PC-9 (cell line): ENCODE measurements at regions of chr1 and their contacts with region 1.

Region 1: GRCh38 chr1:37474046-37474759 is at the start of gene ZC3H12A:
- DNase-seq: peak; percentile 76 to 96
- H3K4me3 ChIP-seq: peak within 1 kb of the TSS; percentile 94
- H3K27ac ChIP-seq: peak within 1 kb of the TSS; percentile 96
- H3K4me1 ChIP-seq: peaks cover 57% of the 10 kb centered on the region
- H3K27me3 ChIP-seq: no peaks in the 10 kb centered on the region
- CTCF ChIP-seq: no peak
- total RNA-seq, gene ZC3H12A: 18.7 and 18.9 TPM in 2 replicates

Region 2: DNA sequence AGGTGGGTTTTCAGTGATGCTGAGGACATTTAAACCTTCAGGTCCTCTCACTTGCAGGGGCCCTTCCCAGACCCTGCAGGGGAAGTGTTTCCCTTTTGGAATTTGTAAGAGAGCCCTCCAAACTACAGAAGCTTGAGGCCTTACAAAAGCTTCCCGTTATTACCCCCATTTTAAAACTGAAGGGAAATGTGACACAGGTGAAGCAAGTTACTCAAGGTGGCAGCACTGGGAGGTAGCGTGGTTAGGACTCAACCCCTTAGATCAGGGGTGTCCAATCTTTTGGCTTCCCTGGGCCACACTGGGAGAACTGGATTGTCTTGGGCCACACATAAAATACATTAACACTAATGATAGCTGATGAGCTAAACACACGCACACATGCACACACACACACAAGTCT is 15.7 kb before region 1 on chr1:
- CTCF ChIA-PET with region 1: interaction called, 7 read pairs
- POLR2A ChIA-PET with region 1: interaction called, 9 read pairs
- intact Hi-C with region 1: loop called (anchors 1 kb)
- DNase-seq: no peak
- H3K4me3 ChIP-seq: no peak overlapping the region
- H3K27ac ChIP-seq: no peak overlapping the region
- H3K4me1 ChIP-seq: peaks cover 8% of the 10 kb centered on the region
- H3K27me3 ChIP-seq: no peaks in the 10 kb centered on the region
- CTCF ChIP-seq: no peak; the same call in 1 of the 2 replicates

Region 3: GRCh38 chr1:37544530-37544929 is 70.3 kb after region 1 on chr1:
- CTCF ChIA-PET with region 1: no interaction called
- POLR2A ChIA-PET with region 1: interaction called, 10 read pairs
- intact Hi-C with region 1: no loop called
- DNase-seq: no peak
- H3K4me3 ChIP-seq: no peak overlapping the region
- H3K27ac ChIP-seq: no peak overlapping the region
- H3K4me1 ChIP-seq: no peaks in the 10 kb centered on the region
- H3K27me3 ChIP-seq: no peaks in the 10 kb centered on the region
- CTCF ChIP-seq: no peak

Region 4: GRCh38 chr1:37620707-37621106 is 146.5 kb after region 1 on chr1:
- CTCF ChIA-PET with region 1: no interaction called
- POLR2A ChIA-PET with region 1: no interaction called
- intact Hi-C with region 1: no loop called
- DNase-seq: no peak
- H3K4me3 ChIP-seq: no peak overlapping the region
- H3K27ac ChIP-seq: no peak overlapping the region
- H3K4me1 ChIP-seq: no peaks in the 10 kb centered on the region
- H3K27me3 ChIP-seq: peaks cover 85% of the 10 kb centered on the region
- CTCF ChIP-seq: no peak

Region 5: GRCh38 chr1:37859507-37860345 is 385.5 kb after region 1 on chr1 and contains the start of gene MTF1:
- CTCF ChIA-PET with region 1: no interaction called
- POLR2A ChIA-PET with region 1: interaction called, 3 read pairs
- intact Hi-C with region 1: loop called (anchors 10 kb)
- DNase-seq: peak; percentile 91 to 97
- H3K4me3 ChIP-seq: peak within 1 kb of the TSS; percentile 76
- H3K27ac ChIP-seq: peak within 1 kb of the TSS; percentile 91
- H3K4me1 ChIP-seq: peaks cover 31% of the 10 kb centered on the region
- H3K27me3 ChIP-seq: no peaks in the 10 kb centered on the region
- CTCF ChIP-seq: peak; percentile 92
- total RNA-seq, gene MTF1: 22.1 and 22.5 TPM in 2 replicates

Region 6: DNA sequence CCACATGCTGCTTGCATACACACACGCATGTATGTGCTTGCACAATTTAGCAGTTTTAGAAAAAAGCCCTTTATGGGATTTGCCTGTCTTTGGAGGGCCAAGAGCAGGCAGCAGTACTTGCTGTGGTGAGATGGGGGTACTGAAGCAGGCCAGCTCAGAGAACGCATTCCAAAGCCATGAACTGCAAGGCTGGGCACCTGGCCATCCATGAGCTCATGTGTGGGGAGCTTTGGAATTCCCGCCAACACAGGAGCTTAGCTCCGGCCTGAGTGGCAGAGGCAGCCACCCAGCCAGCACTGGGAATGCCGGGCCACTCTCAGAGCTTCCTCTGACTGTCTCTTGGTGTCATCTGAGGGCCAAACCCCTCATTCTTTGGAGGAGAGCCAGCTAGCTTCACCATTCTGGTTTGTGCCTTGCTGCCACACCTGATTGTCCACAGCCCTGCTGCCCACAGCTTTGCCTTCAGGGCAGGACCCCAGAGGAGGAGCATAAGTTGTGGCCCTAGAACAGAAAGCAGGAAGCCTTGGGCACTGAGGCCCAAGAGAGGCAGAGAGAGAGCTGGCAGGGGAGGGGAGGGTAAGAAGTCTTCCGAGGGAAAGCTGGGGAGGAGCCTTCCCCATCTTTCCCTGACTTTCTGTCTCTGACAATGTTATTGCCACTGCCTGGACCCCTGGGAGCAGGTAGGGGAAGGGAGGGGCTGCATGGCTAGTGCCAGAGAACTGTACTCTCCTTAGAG is 664.5 kb after region 1 on chr1:
- CTCF ChIA-PET with region 1: no interaction called
- POLR2A ChIA-PET with region 1: no interaction called
- intact Hi-C with region 1: loop called (anchors 10 kb)
- DNase-seq: peak; percentile 99
- H3K4me3 ChIP-seq: no peak overlapping the region; the same call in 1 of the 2 replicates
- H3K27ac ChIP-seq: peak overlapping the region; percentile 48
- H3K4me1 ChIP-seq: peaks cover 58% of the 10 kb centered on the region
- H3K27me3 ChIP-seq: no peaks in the 10 kb centered on the region
- CTCF ChIP-seq: no peak